ENCODE measurements at regions of chr12 and their contacts with region 1.

Region 1: GRCh38 chr12:17866802-17867201 is 223.2 kb downstream of the RERGL start:
- DNase-seq: no peak
- ATAC-seq: no peak
- H3K4me3 Mint-ChIP-seq: no peak overlapping the region
- H3K27ac Mint-ChIP-seq: no peak overlapping the region
- H3K4me1 Mint-ChIP-seq: no peaks in the 10 kb centered on the region
- H3K27me3 Mint-ChIP-seq: no peaks in the 10 kb centered on the region

Region 2: GRCh38 chr12:17778242-17778641 is 88.6 kb before region 1 on chr12:
- CTCF ChIA-PET with region 1: no interaction called
- POLR2A ChIA-PET with region 1: no interaction called
- intact Hi-C with region 1: loop called (anchors 2 kb)
- DNase-seq: no peak
- ATAC-seq: no peak
- H3K4me3 Mint-ChIP-seq: no peak overlapping the region
- H3K27ac Mint-ChIP-seq: no peak overlapping the region
- H3K4me1 Mint-ChIP-seq: no peaks in the 10 kb centered on the region
- H3K27me3 Mint-ChIP-seq: no peaks in the 10 kb centered on the region